ENCODE measurements at regions of chr13 and their contacts with region 1.

Region 1: DNA sequence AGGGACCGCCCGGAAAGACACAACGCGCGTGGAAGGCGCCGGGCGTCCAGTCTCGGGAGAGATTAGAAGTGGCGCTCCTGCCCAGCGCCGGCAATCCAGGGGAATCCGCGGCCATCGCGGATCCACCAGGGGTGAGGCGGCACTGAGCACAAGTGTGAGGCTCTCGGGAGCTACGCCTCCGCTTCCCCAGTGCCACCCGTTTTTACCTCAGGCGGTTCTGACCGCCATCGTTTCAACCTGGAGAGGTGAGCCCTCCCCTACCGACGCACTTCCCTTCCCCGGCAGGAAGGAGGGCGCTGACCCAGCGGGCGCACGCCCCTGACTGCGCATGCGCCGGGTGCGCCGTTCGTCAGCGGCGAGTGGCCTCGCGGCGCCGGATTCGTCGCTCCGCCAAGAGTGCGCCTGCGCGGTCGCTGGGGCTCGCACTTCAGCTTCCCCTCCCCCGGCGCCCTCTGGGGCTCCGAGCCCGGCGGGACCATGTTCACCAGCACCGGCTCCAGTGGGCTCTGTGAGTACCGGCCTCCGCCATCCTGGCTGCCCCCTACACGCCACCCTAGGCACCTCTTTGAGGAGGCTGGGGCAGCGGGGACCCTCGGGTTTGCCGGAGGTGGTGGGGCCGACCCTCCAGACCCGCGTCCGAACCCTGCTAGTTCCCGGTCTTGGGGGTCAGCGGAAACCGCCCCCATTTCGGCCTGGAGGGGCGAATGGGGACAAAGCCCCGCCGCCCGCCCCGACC is at the start of gene UBAC2:
- H3K4me3 Mint-ChIP-seq: peak within 1 kb of the TSS; percentile 86
- H3K27ac Mint-ChIP-seq: peak within 1 kb of the TSS; percentile 88
- H3K4me1 Mint-ChIP-seq: peaks cover 39% of the 10 kb centered on the region
- H3K27me3 Mint-ChIP-seq: no peaks in the 10 kb centered on the region

Region 2: DNA sequence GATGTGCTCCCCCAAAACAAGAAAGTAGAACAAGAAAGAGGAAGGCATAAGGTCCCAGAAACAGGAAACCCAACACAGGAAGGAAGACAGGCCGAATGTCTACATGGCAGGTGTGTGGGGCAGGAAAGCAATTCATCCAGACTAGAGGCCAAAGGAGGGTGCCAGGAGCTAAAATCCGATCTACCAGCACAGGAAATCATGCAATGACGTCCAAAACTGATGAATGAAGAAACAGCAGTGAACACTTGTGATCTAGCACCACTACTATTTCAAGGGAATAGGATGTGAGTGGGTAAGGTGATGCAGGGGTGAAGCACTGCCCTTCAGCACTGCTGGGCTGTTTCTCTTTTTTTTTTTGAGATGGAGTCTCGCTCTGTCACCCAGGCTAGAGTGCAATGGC is 281.8 kb before region 1 on chr13:
- intact Hi-C with region 1: no loop called
- H3K4me3 Mint-ChIP-seq: no peak overlapping the region
- H3K27ac Mint-ChIP-seq: no peak overlapping the region
- H3K4me1 Mint-ChIP-seq: peaks cover 11% of the 10 kb centered on the region
- H3K27me3 Mint-ChIP-seq: peaks cover 5% of the 10 kb centered on the region

Region 3: DNA sequence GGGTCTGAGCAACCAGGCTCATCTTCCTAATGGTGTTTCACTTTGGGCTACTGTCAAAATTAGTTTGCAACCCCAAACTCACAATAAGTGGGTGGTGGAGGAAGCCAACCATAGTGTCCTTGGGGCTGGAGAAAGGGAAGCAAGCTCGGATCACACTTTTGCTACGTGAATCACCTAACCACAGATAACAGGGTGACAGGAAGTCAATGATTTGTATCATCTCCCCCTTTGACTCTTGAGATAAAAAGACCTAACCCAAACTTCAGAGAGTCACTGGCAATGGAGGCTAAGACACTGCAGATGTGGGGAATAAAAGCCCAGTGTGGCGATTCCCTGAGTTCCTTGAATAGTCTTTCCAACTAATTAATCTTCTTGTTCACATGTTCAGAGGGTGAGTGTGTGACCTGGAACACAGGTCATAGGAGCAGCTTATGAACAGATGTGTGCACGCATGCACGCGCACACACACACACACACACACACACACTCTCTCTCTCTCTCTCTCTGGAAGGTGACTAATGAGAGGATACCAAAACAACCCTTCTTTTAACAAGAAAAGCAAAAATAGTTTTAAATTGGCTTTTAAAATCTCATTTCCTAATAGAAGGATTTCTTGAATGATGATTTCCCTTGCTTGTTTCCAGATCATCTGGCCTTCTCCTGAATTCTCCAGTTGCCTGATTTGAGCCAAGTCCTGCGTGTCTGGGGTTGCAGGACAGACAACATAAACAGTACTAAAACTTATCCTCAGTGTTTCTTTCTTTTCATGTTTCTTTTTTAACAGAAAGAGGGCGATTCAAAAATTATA is 201.6 kb before region 1 on chr13:
- intact Hi-C with region 1: no loop called
- H3K4me3 Mint-ChIP-seq: no peak overlapping the region
- H3K27ac Mint-ChIP-seq: no peak overlapping the region
- H3K4me1 Mint-ChIP-seq: no peaks in the 10 kb centered on the region
- H3K27me3 Mint-ChIP-seq: peaks cover 47% of the 10 kb centered on the region

Region 4: DNA sequence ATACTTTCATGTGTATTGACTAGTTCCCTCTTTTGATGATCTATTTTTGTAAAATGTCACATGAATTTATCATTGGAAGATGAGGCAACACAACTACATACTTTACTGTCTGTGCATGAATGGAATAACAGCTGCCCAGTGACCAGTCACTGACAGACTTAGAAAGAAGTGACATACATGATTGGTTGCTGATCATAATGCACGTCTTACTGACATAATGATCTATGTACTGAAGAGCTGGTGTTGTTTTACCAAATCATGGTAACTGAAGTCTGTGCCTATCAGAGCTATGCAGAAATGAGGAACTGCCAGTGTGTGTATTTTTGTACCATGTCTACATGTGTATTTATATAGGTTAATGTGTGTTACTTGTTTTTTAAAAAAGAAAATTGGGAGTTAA is 31.1 kb after region 1 on chr13:
- intact Hi-C with region 1: loop called (anchors 2 kb)
- H3K4me3 Mint-ChIP-seq: no peak overlapping the region
- H3K27ac Mint-ChIP-seq: peak overlapping the region; percentile 79
- H3K4me1 Mint-ChIP-seq: peaks cover 52% of the 10 kb centered on the region
- H3K27me3 Mint-ChIP-seq: no peaks in the 10 kb centered on the region

Region 5: DNA sequence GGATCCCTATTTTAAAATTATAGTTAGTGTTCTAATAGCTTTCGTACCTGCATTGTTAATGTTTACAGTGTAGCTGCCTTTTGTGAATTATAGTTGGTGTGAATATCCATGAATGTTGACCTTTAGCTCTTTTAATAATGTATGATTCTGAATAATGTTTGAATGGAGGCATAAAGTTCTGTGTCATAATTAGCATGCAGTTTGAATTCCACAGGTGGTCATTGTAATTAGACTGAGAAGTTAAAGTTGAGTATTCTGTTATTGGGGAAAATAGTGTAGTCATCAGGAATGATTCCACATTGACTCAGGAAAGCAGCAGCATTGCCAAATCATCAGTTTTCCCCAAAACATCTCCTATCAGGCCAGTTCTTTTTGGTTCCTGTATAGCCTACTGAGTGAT is 45.5 kb after region 1 on chr13:
- intact Hi-C with region 1: no loop called
- H3K4me3 Mint-ChIP-seq: no peak overlapping the region
- H3K27ac Mint-ChIP-seq: no peak overlapping the region
- H3K4me1 Mint-ChIP-seq: peaks cover 8% of the 10 kb centered on the region
- H3K27me3 Mint-ChIP-seq: no peaks in the 10 kb centered on the region

Region 6: DNA sequence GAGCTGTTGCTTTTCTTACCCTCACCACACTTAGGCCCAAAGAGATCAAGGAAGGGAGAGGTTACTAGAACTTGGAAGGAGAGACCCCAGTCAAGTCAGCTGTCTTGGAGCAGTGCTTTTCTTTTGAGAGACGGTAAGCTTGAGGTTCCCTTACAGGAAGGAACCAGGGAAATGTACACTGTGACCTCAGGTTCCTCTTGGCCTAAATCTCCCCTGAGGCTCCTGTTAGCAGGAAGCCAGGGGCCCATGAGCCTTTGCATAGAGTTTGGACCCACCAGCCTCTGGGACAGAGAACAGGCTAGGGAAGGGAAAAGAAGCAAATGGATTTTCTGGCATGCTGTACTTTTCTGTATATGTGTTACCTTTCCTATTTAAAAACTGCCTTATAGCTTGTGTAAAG is 63.5 kb after region 1 on chr13:
- intact Hi-C with region 1: loop called (anchors 5 kb)
- H3K4me3 Mint-ChIP-seq: no peak overlapping the region
- H3K27ac Mint-ChIP-seq: no peak overlapping the region
- H3K4me1 Mint-ChIP-seq: peaks cover 56% of the 10 kb centered on the region
- H3K27me3 Mint-ChIP-seq: no peaks in the 10 kb centered on the region